Panc1 (cell line): ENCODE measurements at regions of chr2 and their contacts with region 1.

Region 1: GRCh38 chr2:105235388-105236054 is 6.0 kb upstream of the GPR45 start:
- DNase-seq: peak; percentile 50
- ATAC-seq: peak; percentile 86
- H3K4me3 ChIP-seq: no peak overlapping the region
- H3K27ac ChIP-seq: no peak overlapping the region
- H3K4me1 ChIP-seq: peaks cover 4% of the 10 kb centered on the region
- H3K27me3 ChIP-seq: no peaks in the 10 kb centered on the region; the same call in 1 of the 2 replicates
- CTCF ChIP-seq: peak; percentile 88

Region 2: DNA sequence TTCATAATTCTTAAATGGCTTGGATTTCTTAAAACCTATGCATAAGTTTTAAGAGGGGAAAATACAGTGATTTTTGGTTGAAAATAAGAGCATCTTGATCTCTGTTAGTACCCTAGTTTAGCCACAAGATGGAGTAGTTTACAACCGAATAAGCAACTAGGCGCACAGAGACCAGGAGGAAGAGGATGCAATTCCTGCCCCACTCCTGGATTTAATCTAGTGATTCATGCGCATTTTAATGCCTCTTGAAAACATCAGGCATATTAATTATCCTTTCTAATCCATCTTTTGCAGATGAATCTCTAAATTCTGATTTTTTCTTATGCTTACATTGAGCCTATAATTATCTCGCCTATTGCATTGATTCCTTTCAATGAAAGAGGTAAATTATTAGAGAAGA is 121.0 kb before region 1 on chr2:
- CTCF ChIA-PET with region 1: interaction called, 10 read pairs
- POLR2A ChIA-PET with region 1: no interaction called
- in situ Hi-C with region 1: no loop called
- intact Hi-C with region 1: loop called (anchors 1 kb)
- DNase-seq: peak; percentile 25
- ATAC-seq: no peak
- H3K4me3 ChIP-seq: no peak overlapping the region
- H3K27ac ChIP-seq: no peak overlapping the region
- H3K4me1 ChIP-seq: no peaks in the 10 kb centered on the region
- H3K27me3 ChIP-seq: no peaks in the 10 kb centered on the region
- CTCF ChIP-seq: peak; percentile 68; the same call in 1 of the 2 replicates

Region 3: DNA sequence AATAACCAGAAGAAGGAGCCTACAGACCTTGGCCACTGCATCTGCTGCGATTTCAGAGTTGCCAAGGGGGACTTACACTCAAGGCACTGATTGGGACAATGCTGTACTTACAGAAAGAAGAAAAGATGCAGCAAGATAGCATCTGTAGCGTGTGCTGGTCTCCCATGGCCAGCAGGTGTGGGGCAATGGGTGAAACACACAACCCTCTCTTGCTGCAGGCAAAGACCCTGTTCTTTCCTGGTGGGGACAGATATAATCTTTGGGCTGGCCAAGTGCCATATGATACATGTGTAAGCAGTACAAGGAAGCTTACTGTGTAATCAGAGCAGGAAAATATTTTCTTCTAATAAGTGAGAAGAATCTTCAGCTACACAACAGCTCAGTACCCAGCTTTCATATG is 79.3 kb before region 1 on chr2:
- CTCF ChIA-PET with region 1: interaction called, 12 read pairs
- POLR2A ChIA-PET with region 1: no interaction called
- in situ Hi-C with region 1: no loop called
- intact Hi-C with region 1: no loop called
- DNase-seq: no peak
- ATAC-seq: no peak
- H3K4me3 ChIP-seq: no peak overlapping the region
- H3K27ac ChIP-seq: no peak overlapping the region
- H3K4me1 ChIP-seq: no peaks in the 10 kb centered on the region
- H3K27me3 ChIP-seq: peaks cover 9% of the 10 kb centered on the region
- CTCF ChIP-seq: no peak

Region 4: DNA sequence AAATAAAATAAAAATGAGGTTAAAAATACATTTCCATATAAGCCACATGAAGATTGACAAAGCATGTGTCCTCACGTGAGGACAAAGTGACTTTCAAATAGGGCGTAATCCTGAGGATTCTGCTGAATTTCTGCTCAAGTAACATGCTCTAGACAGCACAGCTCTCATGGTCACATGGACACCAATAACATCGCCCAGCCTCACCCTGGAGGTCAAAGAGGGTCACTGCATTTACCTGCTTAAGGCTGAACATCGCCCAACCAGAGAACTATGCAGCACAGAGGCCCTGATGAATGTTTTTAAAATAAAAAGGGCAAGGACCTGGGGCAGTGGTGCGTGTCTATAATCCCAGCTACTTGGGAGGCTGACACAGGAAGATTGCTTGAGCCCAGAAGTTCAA is 63.8 kb after region 1 on chr2:
- CTCF ChIA-PET with region 1: interaction called, 14 read pairs
- POLR2A ChIA-PET with region 1: no interaction called
- in situ Hi-C with region 1: no loop called
- intact Hi-C with region 1: no loop called
- DNase-seq: no peak
- ATAC-seq: peak; percentile 63
- H3K4me3 ChIP-seq: no peak overlapping the region
- H3K27ac ChIP-seq: no peak overlapping the region
- H3K4me1 ChIP-seq: no peaks in the 10 kb centered on the region
- H3K27me3 ChIP-seq: no peaks in the 10 kb centered on the region
- CTCF ChIP-seq: no peak

Region 5: DNA sequence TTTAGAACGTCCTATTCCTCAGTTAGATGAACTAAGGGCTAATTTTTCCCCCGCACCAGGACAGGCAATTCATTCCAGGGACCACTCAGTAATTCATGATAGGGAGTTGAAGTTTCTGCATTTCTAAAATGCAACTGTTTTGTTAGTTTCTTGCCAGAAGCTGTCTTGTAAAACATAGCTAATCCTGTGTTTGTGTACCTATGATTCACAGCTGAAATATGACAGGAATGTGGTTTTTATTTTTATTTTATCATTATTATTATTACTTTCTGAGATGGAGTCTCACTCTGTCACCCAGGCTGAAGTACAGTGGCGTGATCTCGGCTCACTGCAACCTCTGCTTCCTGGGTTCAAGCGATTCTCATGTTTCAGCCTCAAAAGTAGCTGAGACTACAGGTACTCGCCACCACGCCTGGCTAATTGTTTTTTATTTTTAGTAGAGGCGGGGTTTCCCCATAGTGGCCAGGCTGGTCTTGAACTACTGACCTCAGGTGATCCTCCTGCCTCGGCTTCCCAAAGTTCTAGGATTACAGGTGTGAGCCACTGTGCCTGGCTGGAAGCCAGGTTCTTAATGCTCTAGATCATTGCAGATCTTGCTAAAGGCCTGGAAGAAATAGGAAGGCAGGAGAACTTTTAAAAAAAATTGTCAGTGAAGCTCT is 318.1 kb after region 1 on chr2:
- CTCF ChIA-PET with region 1: no interaction called
- POLR2A ChIA-PET with region 1: no interaction called
- in situ Hi-C with region 1: no loop called
- intact Hi-C with region 1: no loop called
- DNase-seq: no peak
- ATAC-seq: peak; percentile 64; the same call in 1 of the 2 replicates
- H3K4me3 ChIP-seq: no peak overlapping the region
- H3K27ac ChIP-seq: 0 out of 2 replicates have a peak overlapping the region, but pooled peaks have one; percentile 46
- H3K4me1 ChIP-seq: peaks cover 16% of the 10 kb centered on the region
- H3K27me3 ChIP-seq: 0 out of 2 replicates have a peak, but pooled peaks cover 2% of the 10 kb centered on the region
- CTCF ChIP-seq: no peak

Region 6: GRCh38 chr2:105697781-105698449 is 462.4 kb after region 1 on chr2:
- CTCF ChIA-PET with region 1: interaction called, 12 read pairs
- POLR2A ChIA-PET with region 1: no interaction called
- in situ Hi-C with region 1: no loop called
- intact Hi-C with region 1: no loop called
- DNase-seq: no peak
- ATAC-seq: no peak
- H3K4me3 ChIP-seq: no peak overlapping the region
- H3K27ac ChIP-seq: no peak overlapping the region
- H3K4me1 ChIP-seq: no peaks in the 10 kb centered on the region
- H3K27me3 ChIP-seq: peaks cover 12% of the 10 kb centered on the region
- CTCF ChIP-seq: no peak

Region 7: DNA sequence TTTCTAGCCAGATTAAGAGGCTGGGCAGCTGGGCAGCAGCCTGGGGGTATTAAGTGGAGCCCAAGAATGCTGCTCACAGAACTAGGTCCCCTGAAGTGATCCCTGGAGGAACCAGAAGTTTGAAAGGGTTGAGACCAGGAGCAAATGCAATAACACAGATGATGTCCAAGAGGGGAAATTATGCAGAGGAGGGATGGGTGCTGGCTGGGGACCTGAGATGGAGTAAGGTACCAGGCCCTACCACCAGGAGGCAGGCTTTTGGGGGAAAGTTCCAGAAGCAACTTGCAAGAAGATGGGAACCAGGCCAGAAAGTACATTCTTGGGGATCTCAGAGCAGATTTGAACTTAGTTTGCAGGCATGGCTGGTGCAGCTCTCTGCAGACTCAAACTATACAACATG is 684.3 kb after region 1 on chr2:
- CTCF ChIA-PET with region 1: interaction called, 15 read pairs
- POLR2A ChIA-PET with region 1: no interaction called
- in situ Hi-C with region 1: no loop called
- intact Hi-C with region 1: no loop called
- DNase-seq: no peak
- ATAC-seq: peak; percentile 63
- H3K4me3 ChIP-seq: no peak overlapping the region
- H3K27ac ChIP-seq: peak overlapping the region; percentile 14; the same call in 1 of the 2 replicates
- H3K4me1 ChIP-seq: peaks cover 4% of the 10 kb centered on the region; the same call in 1 of the 2 replicates
- H3K27me3 ChIP-seq: no peaks in the 10 kb centered on the region
- CTCF ChIP-seq: peak; percentile 62